ENCODE measurements at regions of chr2 and their contacts with region 1.

Region 1: GRCh38 chr2:101205521-101205998 is 47.1 kb upstream of the CNOT11 start:
- DNase-seq: peak; percentile 84
- ATAC-seq: peak; percentile 90
- H3K4me3 ChIP-seq: peak overlapping the region; percentile 52
- H3K27ac ChIP-seq: no peak overlapping the region
- H3K4me1 ChIP-seq: peaks cover 8% of the 10 kb centered on the region
- H3K27me3 ChIP-seq: no peaks in the 10 kb centered on the region
- CTCF ChIP-seq: peak; percentile 73

Region 2: DNA sequence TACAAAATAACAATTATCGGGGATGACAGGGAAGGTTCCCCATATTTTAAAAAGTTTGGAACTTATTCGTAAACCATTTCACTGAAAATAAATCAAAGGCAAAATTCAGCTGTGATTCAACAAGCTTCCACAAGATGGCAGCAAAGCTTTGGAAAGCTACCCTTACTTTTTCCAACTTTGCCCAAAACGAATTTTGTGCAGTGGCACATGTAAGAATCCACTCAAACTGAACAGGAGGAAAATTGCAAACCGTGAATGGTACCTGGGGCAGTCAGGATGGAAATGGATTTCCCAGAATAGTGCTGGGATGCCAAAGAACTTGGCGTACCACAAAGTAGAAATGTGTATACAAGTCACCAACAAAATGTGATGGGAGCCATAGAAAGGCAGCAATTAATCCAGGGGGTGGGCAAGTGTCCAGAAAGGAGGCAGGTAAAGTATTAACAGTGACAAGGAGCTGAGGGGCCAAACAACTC is 192.8 kb before region 1 on chr2:
- CTCF ChIA-PET with region 1: interaction called, 19 read pairs
- POLR2A ChIA-PET with region 1: no interaction called
- intact Hi-C with region 1: loop called (anchors 1 kb)
- DNase-seq: peak; percentile 78
- ATAC-seq: no peak; the same call in 1 of the 2 replicates
- H3K4me3 ChIP-seq: no peak overlapping the region
- H3K27ac ChIP-seq: no peak overlapping the region
- H3K4me1 ChIP-seq: no peaks in the 10 kb centered on the region
- H3K27me3 ChIP-seq: no peaks in the 10 kb centered on the region
- CTCF ChIP-seq: peak; percentile 89

Region 3: DNA sequence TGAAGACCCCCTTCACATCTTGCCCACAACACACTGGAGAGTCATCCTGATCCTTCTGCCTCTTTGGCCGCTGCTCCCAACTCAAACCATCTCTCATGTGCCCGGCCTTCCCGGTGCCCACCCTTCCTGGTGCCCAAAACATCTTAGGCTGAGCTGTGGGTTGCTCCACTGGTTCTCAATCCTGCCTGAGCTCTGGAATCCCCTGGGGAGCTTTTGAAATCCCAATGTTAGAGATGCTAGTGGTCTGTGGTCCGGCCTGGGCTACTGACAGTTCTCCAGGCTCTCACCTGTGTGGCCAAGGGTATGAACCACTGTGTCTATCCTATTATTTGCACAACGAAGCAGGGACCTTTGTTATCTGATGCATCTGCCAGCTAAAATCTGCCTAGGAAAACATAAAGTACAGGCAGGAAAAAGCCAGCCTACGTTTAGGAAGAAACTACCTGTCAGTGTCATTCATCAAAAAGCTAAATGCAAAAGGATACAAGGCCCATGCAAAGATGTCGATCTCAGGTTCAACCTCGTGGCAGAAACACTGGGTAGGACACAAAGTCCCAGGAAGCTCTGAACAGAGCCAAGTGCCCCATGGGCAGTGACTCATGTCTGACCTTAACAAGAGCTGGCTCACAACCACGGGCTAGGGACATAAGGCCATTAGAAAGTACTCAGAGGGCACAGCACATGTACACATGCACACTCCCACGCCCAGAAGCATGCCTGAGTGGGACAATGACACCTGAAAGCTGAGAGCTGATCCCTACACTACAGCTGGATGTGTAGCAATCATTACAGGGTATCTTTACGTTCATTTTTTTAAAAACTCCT is 85.2 kb before region 1 on chr2:
- CTCF ChIA-PET with region 1: no interaction called
- POLR2A ChIA-PET with region 1: interaction called, 19 read pairs
- intact Hi-C with region 1: no loop called
- DNase-seq: peak; percentile 95
- ATAC-seq: peak; percentile 47
- H3K4me3 ChIP-seq: no peak overlapping the region
- H3K27ac ChIP-seq: peak overlapping the region; percentile 98
- H3K4me1 ChIP-seq: peaks cover 56% of the 10 kb centered on the region
- H3K27me3 ChIP-seq: no peaks in the 10 kb centered on the region
- CTCF ChIP-seq: no peak